Aorta (tissue), 5 donors: ENCODE measurements at regions of chr4 and their contacts with region 1.

Region 1: DNA sequence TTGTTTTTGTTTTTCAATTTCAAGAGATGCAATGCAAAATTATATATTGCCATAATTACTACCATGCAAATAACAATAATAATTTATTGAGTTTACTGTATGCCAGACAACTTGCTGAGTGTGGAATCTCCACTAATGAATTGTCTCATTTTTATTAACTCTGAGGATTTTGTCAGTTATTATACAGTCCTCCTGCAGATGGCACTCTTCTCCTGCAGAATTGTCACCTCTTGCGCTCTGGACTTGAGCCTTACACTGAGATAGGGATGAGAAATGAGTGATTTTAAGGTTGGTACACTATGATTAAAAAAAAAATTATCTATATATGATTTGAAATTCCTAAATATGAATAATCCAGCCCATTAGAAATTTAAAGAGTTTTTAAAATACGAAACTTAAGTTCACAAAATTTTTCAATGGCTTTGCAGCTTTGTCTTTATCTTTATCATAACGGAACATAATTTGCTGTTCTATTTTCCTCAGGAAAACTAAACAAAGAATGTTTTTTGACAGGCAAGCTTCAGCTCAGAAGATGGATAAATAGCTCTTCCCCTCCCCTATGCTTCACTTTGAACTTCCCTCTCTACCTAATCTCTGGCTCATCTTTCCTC is 12.7 kb upstream of the PAQR3 start:
- DNase-seq: no peak
- ATAC-seq: peak; percentile 87
- H3K4me3 ChIP-seq: no peak overlapping the region
- H3K27ac ChIP-seq: no peak overlapping the region
- H3K4me1 ChIP-seq: no peaks in the 10 kb centered on the region
- H3K27me3 ChIP-seq: no peaks in the 10 kb centered on the region

Region 2: GRCh38 chr4:78907638-78908037 is 44.3 kb before region 1 on chr4:
- intact Hi-C with region 1: no loop called
- DNase-seq: no peak
- ATAC-seq: no peak
- H3K4me3 ChIP-seq: no peak overlapping the region
- H3K27ac ChIP-seq: no peak overlapping the region
- H3K4me1 ChIP-seq: no peaks in the 10 kb centered on the region
- H3K27me3 ChIP-seq: no peaks in the 10 kb centered on the region

Region 3: DNA sequence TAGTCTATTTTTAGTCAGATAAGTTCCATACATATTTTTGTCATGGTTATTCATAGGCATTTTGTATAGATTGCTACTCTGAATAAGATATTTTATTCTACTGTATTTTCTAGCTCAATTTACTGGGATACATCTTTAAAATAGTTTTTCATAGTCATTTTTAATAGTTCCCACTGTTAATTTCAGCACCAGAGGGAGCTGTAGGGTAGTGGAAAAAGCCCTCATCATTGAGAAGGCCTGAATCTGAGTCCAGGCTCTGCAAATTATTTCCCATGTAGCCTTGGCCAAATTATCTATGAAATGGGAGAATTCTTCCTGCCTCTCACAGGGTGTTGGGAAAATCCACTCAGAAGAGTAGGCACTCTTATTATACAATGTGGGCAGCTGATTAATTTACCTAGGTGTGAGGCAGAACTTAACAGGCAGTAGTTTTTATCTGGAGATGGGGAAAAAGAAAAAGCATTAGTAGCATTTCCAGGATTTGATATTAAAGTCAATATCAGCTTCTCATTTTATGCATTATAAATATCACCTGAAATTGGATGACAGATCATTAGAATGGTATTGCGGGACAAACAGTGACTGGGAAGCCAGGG is 90.2 kb after region 1 on chr4:
- intact Hi-C with region 1: loop called in 1 of 2 experiments (anchors 10 kb)
- DNase-seq: no peak
- ATAC-seq: no peak
- H3K4me3 ChIP-seq: no peak overlapping the region
- H3K27ac ChIP-seq: no peak overlapping the region
- H3K4me1 ChIP-seq: no peaks in the 10 kb centered on the region
- H3K27me3 ChIP-seq: no peaks in the 10 kb centered on the region

Region 4: DNA sequence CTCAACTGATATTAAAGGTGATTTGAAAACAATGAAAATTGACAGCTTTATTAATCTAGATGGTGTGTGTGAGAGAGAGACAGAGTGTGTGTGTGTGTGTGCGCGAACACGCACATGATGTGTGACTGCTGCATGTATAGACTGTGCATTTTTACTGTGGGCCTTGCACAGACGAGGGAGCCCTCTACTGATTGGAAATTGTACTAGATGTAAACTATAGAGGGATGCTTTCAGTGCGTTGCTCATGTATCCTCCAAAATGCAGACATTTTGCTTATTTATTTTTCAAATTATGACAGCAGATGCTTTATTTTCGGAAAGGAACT is 624.4 kb after region 1 on chr4:
- intact Hi-C with region 1: loop called (anchors 10 kb)
- DNase-seq: no peak
- ATAC-seq: peak; percentile 59
- H3K4me3 ChIP-seq: no peak overlapping the region
- H3K27ac ChIP-seq: no peak overlapping the region
- H3K4me1 ChIP-seq: peaks cover 0 to 7% of the 10 kb centered on the region in 2 donors
- H3K27me3 ChIP-seq: no peaks in the 10 kb centered on the region

Region 5: GRCh38 chr4:80072744-80073472 is 1120.9 kb after region 1 on chr4 and contains the start of gene ANTXR2:
- intact Hi-C with region 1: loop called in 1 of 2 experiments (anchors 10 kb)
- DNase-seq: peak; percentile 96
- ATAC-seq: peak; percentile 96
- H3K4me3 ChIP-seq: peak within 1 kb of the TSS; percentile 69 to 83
- H3K27ac ChIP-seq: peak within 1 kb of the TSS in 1 of 2 donors; percentile 76
- H3K4me1 ChIP-seq: no peaks in the 10 kb centered on the region
- H3K27me3 ChIP-seq: no peaks in the 10 kb centered on the region
- total RNA-seq, gene ANTXR2: 82.6 to 88.0 TPM

Region 6: GRCh38 chr4:80215449-80216052 is 1263.6 kb after region 1 on chr4:
- intact Hi-C with region 1: loop called (anchors 2 to 5 kb)
- DNase-seq: no peak
- ATAC-seq: no peak
- H3K4me3 ChIP-seq: no peak overlapping the region
- H3K27ac ChIP-seq: no peak overlapping the region
- H3K4me1 ChIP-seq: no peaks in the 10 kb centered on the region
- H3K27me3 ChIP-seq: no peaks in the 10 kb centered on the region